Calu3 (cell line): ENCODE measurements at regions of chr2 and their contacts with region 1.

Region 1: GRCh38 chr2:102106133-102106556 is 36.4 kb upstream of the IL1R1 start:
- DNase-seq: peak; percentile 37
- H3K4me3 Mint-ChIP-seq: no peak overlapping the region
- H3K27ac Mint-ChIP-seq: peak overlapping the region; percentile 55
- H3K4me1 Mint-ChIP-seq: peaks cover 58% of the 10 kb centered on the region
- H3K27me3 Mint-ChIP-seq: no peaks in the 10 kb centered on the region
- CTCF ChIP-seq: no peak

Region 2: DNA sequence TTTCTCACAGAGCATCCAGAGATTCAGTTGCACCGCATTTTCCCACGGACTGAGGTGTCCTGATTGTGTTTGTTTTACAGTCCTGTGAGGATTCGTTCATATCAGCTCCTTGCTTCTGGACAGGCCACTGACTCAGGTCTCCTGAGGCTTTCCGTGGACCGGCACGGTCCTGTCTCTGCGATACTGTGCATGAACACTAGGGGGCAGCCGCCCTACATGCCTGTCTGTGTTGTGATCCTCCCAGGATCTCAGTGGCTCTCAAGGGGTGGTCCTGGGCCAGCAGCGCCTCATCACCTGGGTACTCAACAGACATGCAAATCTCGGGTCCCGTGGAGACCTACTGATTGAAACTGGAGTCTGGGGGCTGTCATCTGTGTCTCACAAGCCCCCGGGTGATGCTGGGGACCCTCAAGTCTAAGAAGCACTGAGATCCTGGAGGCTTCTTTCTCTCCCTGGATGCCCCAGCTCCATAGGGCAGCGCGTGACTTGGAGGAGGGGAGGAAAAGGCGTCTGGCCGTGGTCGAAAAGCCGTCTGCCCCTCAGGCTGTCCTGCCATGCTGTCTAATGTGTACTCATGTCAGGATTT is 85.5 kb before region 1 on chr2:
- CTCF ChIA-PET with region 1: interaction called, 3 read pairs
- intact Hi-C with region 1: loop called (anchors 5 kb)
- DNase-seq: peak; percentile 90
- H3K4me3 Mint-ChIP-seq: no peak overlapping the region
- H3K27ac Mint-ChIP-seq: no peak overlapping the region
- H3K4me1 Mint-ChIP-seq: peaks cover 14% of the 10 kb centered on the region
- H3K27me3 Mint-ChIP-seq: no peaks in the 10 kb centered on the region
- CTCF ChIP-seq: peak; percentile 95

Region 3: GRCh38 chr2:102155642-102156491 is 49.7 kb after region 1 on chr2:
- CTCF ChIA-PET with region 1: no interaction called
- intact Hi-C with region 1: no loop called
- DNase-seq: no peak
- H3K4me3 Mint-ChIP-seq: no peak overlapping the region
- H3K27ac Mint-ChIP-seq: no peak overlapping the region
- H3K4me1 Mint-ChIP-seq: no peaks in the 10 kb centered on the region
- H3K27me3 Mint-ChIP-seq: no peaks in the 10 kb centered on the region
- CTCF ChIP-seq: no peak

Region 4: DNA sequence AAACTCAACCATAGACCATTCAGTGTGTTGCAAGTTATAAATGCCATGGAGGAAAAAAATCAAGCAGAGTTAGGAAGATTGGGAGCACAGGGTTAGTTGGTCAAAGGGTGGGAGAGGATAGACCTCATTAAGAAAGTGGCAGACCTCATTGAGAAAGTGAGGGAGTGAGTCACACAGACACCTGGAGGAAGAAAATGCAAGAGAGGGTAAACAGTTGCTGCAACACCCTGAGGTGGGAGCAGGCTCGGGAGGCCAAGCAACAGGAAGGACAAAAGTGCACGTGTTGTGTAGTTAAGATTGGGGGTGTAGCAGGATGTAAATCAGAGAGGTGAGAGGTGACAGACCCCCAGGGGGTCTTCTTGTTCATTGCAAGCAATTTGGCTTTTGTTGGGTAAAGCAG is 211.6 kb after region 1 on chr2:
- CTCF ChIA-PET with region 1: no interaction called
- intact Hi-C with region 1: no loop called
- DNase-seq: peak; percentile 45
- H3K4me3 Mint-ChIP-seq: no peak overlapping the region
- H3K27ac Mint-ChIP-seq: no peak overlapping the region
- H3K4me1 Mint-ChIP-seq: no peaks in the 10 kb centered on the region
- H3K27me3 Mint-ChIP-seq: peaks cover 3% of the 10 kb centered on the region
- CTCF ChIP-seq: no peak